PC-3 (cell line): ENCODE measurements at regions of chr1 and their contacts with region 1.

Region 1: DNA sequence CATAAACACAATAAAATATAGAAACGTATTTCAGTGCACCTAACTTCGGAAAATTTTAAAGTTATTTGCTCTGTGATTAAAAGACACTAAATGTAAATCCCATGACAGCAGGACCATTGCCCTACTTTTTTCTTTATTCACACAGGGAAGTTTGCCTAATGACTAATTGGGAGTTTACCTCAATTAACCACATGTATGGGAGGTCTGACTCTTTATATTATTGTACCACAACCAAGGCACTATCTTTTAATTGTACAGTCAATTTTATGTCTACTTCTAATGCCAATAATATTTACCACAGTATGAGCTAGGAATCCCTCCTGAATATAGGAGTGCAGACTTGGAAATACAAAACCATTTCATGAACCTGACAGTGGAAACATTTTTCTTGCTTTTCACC is 360.8 kb upstream of the NEGR1 start:
- DNase-seq: peak; percentile 75
- ATAC-seq: peak; percentile 91
- H3K4me3 ChIP-seq: peak overlapping the region; percentile 13; the same call in 1 of the 2 replicates
- H3K27ac ChIP-seq: peak overlapping the region; percentile 30
- H3K4me1 ChIP-seq: peaks cover 18% of the 10 kb centered on the region
- H3K27me3 ChIP-seq: no peaks in the 10 kb centered on the region
- CTCF ChIP-seq: no peak

Region 2: DNA sequence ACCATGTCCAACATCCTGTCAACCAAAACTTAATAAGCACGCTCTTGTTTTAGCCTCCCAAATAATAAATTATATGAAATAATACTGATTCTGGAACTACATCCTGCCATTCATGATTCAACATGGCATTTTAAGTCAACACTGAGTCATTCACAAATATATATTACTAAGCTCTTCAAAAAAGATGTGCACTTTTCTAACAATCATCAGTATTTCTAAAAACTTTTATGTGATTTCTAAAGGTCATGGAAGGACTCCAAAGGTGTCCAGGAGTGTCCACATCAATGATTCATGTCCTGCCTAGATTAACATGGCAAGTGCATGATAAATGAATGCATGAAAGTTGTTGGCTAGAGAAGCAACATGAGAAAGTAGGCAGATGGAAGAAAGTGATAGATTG is 412.4 kb before region 1 on chr1:
- CTCF ChIA-PET with region 1: no interaction called
- POLR2A ChIA-PET with region 1: no interaction called
- intact Hi-C with region 1: loop called (anchors 1 kb)
- DNase-seq: peak; percentile 96
- ATAC-seq: peak; percentile 73
- H3K4me3 ChIP-seq: peak overlapping the region; percentile 31; the same call in 1 of the 2 replicates
- H3K27ac ChIP-seq: peak overlapping the region; percentile 92
- H3K4me1 ChIP-seq: peaks cover 37% of the 10 kb centered on the region
- H3K27me3 ChIP-seq: no peaks in the 10 kb centered on the region
- CTCF ChIP-seq: no peak

Region 3: DNA sequence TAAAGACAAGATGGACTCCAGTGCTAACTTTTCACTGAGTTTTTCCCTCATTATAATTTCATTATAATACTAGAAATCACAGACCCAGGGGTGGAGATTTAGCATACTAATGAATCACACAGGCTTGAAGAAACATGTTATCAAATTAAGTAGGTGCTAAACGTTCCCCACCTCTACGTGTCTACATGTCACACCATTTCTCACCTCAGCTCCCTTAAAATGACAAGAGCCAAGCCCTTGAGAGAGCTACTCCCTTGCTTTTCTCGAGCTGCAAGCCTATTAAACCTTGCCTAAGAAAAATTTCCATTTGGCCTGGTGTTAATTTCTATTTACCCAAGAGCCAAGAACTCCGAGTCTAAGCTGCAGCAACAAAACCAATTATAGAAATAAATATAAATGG is 35.5 kb after region 1 on chr1:
- CTCF ChIA-PET with region 1: no interaction called
- POLR2A ChIA-PET with region 1: no interaction called
- intact Hi-C with region 1: loop called (anchors 2 kb)
- DNase-seq: no peak
- ATAC-seq: no peak
- H3K4me3 ChIP-seq: no peak overlapping the region
- H3K27ac ChIP-seq: no peak overlapping the region
- H3K4me1 ChIP-seq: no peaks in the 10 kb centered on the region
- H3K27me3 ChIP-seq: no peaks in the 10 kb centered on the region
- CTCF ChIP-seq: no peak

Region 4: GRCh38 chr1:72705921-72706320 is 62.8 kb after region 1 on chr1:
- CTCF ChIA-PET with region 1: no interaction called
- POLR2A ChIA-PET with region 1: no interaction called
- intact Hi-C with region 1: no loop called
- DNase-seq: no peak
- ATAC-seq: no peak
- H3K4me3 ChIP-seq: no peak overlapping the region
- H3K27ac ChIP-seq: no peak overlapping the region
- H3K4me1 ChIP-seq: no peaks in the 10 kb centered on the region
- H3K27me3 ChIP-seq: no peaks in the 10 kb centered on the region
- CTCF ChIP-seq: no peak

Region 5: DNA sequence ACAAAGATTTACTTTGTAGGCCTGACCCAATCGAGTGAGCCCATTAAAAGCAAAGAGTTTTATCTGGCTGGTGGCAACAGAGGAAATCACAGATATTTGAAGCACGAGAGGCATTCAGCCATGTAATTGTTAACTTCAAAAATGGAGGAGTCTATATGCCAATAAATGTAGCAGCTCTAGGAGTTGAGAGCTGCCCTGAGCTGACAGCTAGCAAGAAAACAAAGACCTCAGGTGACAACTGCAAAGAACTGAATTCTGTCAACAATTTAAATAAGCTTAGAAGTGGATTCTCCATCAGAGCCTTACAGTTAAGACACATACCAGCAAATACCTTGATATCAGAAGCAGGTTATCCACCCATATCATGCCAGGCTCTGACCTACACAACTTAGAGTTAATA is 102.3 kb after region 1 on chr1:
- CTCF ChIA-PET with region 1: no interaction called
- POLR2A ChIA-PET with region 1: no interaction called
- intact Hi-C with region 1: loop called (anchors 5 kb)
- DNase-seq: no peak
- ATAC-seq: no peak
- H3K4me3 ChIP-seq: no peak overlapping the region
- H3K27ac ChIP-seq: no peak overlapping the region
- H3K4me1 ChIP-seq: no peaks in the 10 kb centered on the region
- H3K27me3 ChIP-seq: no peaks in the 10 kb centered on the region
- CTCF ChIP-seq: no peak

Region 6: GRCh38 chr1:72780212-72780611 is 137.1 kb after region 1 on chr1:
- CTCF ChIA-PET with region 1: no interaction called
- POLR2A ChIA-PET with region 1: no interaction called
- intact Hi-C with region 1: no loop called
- DNase-seq: no peak
- ATAC-seq: no peak
- H3K4me3 ChIP-seq: no peak overlapping the region
- H3K27ac ChIP-seq: no peak overlapping the region
- H3K4me1 ChIP-seq: no peaks in the 10 kb centered on the region
- H3K27me3 ChIP-seq: no peaks in the 10 kb centered on the region
- CTCF ChIP-seq: no peak